Sigmoid colon (tissue), 7 donors: ENCODE measurements at regions of chr6 and their contacts with region 1.

Region 1: DNA sequence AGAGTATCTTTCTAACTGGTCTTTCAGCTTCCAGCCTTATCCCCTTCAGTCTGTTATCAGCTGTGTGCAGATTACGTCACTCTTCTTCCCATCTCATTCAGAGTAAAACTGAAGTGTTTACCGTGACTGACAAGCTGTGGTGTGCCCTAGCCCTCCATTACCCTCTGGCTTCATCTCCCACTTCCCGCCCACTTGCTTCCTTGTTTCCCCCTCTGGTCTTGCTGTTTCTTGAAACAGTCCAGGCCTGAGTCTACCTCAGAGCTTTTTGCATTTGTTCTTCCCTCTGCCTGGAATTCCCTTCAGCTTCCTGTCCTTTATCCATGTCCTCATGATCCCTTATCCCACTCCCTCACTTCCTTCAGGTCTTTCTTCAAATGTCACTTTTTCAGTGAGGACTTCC is 66.9 kb downstream of the CARMIL1 start:
- DNase-seq: no peak
- H3K4me3 ChIP-seq: no peak overlapping the region
- H3K27ac ChIP-seq: no peak overlapping the region
- H3K4me1 ChIP-seq: no peaks in the 10 kb centered on the region
- H3K27me3 ChIP-seq: no peaks in the 10 kb centered on the region
- CTCF ChIP-seq: no peak
- EP300 ChIP-seq: no peak
- POLR2A ChIP-seq: no peak

Region 2: GRCh38 chr6:25202505-25202904 is 143.6 kb before region 1 on chr6:
- intact Hi-C with region 1: no loop called
- DNase-seq: no peak
- H3K4me3 ChIP-seq: no peak overlapping the region
- H3K27ac ChIP-seq: no peak overlapping the region
- H3K4me1 ChIP-seq: peaks cover 0 to 4% (median 1%) of the 10 kb centered on the region in 4 donors
- H3K27me3 ChIP-seq: no peaks in the 10 kb centered on the region
- CTCF ChIP-seq: no peak
- EP300 ChIP-seq: no peak
- POLR2A ChIP-seq: no peak

Region 3: DNA sequence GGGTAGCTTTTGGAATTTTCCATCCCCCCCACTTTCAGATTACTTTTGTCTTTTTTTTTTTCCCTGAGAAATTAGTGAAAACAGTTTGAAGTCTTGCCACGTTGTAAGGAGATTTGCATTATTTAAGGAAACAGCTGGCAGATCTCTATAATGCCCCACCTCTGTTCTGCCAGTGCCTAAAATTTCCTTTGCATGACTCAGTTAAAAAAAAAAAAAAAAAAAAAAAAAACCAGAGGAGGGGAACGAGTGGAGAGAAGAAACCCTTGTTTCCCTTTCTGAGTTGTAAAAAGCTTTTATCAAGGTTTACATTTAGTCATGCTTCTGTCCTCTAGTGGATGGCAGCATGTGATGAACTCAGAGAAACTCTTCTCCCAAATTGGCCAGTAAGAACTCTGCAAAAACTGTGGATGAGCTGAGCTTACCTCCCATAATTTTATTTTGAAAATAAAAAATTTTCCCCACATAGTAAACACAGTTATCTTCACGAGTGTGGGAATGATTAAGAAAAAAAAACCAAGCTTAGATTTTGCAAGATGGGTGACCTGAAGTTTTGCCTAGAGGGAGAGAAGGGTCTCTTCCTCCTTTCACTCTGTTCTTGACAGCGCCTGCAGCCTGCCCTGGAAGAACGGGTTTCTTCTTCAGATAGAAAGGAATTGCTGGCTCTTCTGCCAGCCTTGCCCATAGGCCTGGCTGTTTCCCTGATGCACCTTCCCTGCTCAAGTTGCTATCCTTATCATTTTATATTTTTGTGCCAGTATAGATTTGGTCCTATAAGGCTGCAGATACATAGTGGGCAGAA is 33.2 kb before region 1 on chr6:
- intact Hi-C with region 1: loop called (anchors 5 kb)
- DNase-seq: no peak
- H3K4me3 ChIP-seq: no peak overlapping the region
- H3K27ac ChIP-seq: peak overlapping the region in 2 of 4 donors; percentile 18 to 53
- H3K4me1 ChIP-seq: peaks cover 0 to 14% (median 0%) of the 10 kb centered on the region in 4 donors
- H3K27me3 ChIP-seq: no peaks in the 10 kb centered on the region
- CTCF ChIP-seq: no peak
- EP300 ChIP-seq: no peak
- POLR2A ChIP-seq: no peak

Region 4: DNA sequence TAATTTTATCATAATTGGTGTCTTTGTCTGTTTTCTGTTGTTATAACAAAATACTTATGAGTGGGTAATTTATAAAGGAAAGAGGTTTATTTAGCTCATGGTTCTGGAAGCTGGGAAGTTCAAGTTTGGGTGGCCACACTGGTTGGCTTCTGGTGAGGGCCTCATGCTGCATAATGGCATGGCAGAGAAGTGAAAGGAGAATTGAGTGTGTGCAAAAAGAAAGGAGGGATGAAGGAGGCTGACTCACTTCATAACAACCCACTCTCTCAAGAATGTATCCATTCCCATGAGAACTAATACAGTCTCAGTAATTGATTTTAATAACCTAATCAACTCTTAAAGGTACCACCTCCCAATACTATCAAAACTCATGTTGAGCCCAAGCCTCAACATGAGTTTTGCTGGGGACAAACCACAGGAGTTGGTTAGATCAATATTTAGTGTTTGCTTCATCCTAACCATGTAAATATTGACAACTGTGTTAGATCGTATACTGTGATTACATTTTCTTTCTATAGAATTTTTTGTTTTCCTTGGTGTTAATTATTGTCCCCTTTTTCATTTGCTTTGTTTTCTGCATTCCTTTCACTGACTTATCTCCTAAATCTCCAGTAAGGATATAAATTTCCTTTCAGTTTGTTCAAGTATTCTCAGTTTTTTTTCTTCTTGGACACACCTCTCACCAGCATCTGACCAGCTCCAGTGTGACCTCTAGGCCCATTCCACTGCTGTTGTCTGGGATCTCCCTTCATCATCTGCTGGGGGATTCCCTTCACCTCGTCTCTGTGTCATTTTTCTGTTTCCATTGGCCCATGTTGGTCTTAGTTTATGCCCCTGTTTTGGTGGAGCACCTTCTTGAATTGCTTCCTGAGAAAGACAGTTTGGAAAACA is 251.1 kb after region 1 on chr6:
- intact Hi-C with region 1: no loop called
- DNase-seq: no peak
- H3K4me3 ChIP-seq: no peak overlapping the region
- H3K27ac ChIP-seq: no peak overlapping the region
- H3K4me1 ChIP-seq: no peaks in the 10 kb centered on the region
- H3K27me3 ChIP-seq: no peaks in the 10 kb centered on the region
- CTCF ChIP-seq: no peak
- EP300 ChIP-seq: no peak
- POLR2A ChIP-seq: no peak